ENCODE measurements at regions of chr12 and their contacts with region 1.

Region 1: DNA sequence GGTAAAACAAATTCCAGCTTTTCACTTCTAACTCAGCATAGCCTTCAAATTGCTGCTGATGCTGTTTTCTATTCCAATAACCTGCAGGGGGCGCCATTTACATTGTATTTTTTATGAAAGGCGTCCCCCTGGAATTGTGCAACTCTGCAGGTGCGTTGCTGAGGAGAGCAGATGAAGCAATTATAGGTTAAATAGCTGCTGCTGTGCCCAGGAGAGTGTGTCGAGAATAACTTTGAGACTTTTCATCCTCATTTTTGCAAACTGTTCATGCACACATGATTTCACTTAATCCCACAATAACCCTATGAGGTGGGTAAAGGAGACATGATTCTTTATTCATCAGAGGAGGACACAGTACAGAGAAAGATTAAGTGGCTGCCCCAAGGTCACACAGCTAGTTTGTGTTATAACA is 75.7 kb downstream of the MYRFL start:
- DNase-seq: peak; percentile 72
- H3K4me3 ChIP-seq: no peak overlapping the region
- H3K27ac ChIP-seq: peak overlapping the region; percentile 35
- H3K4me1 ChIP-seq: peaks cover 12% of the 10 kb centered on the region
- H3K27me3 ChIP-seq: no peaks in the 10 kb centered on the region
- CTCF ChIP-seq: peak; percentile 62
- POLR2A ChIP-seq: no peak

Region 2: GRCh38 chr12:69879041-69879960 is 21.4 kb before region 1 on chr12:
- CTCF ChIA-PET with region 1: interaction called, 17 read pairs
- POLR2A ChIA-PET with region 1: no interaction called
- dilution Hi-C with region 1: no loop called
- intact Hi-C with region 1: no loop called
- DNase-seq: peak; percentile 76
- H3K4me3 ChIP-seq: no peak overlapping the region
- H3K27ac ChIP-seq: no peak overlapping the region
- H3K4me1 ChIP-seq: no peaks in the 10 kb centered on the region
- H3K27me3 ChIP-seq: no peaks in the 10 kb centered on the region
- CTCF ChIP-seq: peak; percentile 87
- POLR2A ChIP-seq: no peak

Region 3: DNA sequence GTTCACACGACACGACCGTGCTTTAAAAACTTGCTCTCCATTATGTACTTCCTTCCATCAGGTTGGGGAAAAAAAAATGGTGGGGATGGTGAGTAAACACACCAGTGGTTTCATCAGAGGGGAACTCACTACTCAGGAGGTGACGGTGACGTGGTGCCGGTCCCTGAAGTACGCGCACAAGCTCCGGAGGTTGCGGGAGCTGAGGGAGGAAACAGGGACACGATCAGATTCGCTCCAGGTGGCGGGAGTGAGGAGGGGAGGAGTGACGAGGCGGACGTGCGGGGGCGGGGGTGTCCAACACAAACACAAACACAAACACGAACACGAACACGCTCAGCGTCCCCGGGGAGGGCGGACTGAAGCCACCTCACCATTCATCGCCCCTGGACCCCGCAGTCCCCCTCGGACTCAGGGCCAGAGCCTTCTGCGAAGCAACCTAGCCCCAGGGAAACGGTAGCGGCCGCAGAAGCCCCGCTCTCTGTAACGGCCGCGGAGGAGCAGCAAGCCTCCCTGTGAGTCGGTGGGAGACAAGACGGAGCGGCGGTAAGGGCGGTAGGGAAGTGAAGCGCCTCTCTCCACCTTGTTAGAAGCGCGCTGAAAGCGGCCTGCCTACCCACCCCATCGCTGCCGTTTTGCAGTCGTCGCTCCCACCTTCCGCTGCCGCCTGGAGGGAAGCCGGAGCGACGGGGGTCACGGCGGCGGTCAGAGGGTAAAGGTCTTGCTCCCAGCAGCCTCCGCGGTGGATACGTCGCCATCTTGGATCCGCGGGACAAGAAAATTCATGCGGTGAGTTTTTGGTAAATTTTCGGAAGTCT is 342.2 kb after region 1 on chr12 and contains the start of gene CNOT2:
- CTCF ChIA-PET with region 1: interaction called, 4 read pairs
- POLR2A ChIA-PET with region 1: no interaction called
- dilution Hi-C with region 1: no loop called
- intact Hi-C with region 1: loop called (anchors 1 kb)
- DNase-seq: peak; percentile 93
- H3K4me3 ChIP-seq: peak within 1 kb of the TSS; percentile 83 to 97 (median 84)
- H3K27ac ChIP-seq: peak within 1 kb of the TSS; percentile 86
- H3K4me1 ChIP-seq: peaks cover 47% of the 10 kb centered on the region
- H3K27me3 ChIP-seq: no peaks in the 10 kb centered on the region
- CTCF ChIP-seq: no peak
- POLR2A ChIP-seq: peak; percentile 35
- total RNA-seq, gene CNOT2: 79.1 and 79.7 TPM in 2 replicates

Region 4: GRCh38 chr12:70507442-70507841 is 606.7 kb after region 1 on chr12:
- CTCF ChIA-PET with region 1: interaction called, 6 read pairs
- POLR2A ChIA-PET with region 1: no interaction called
- dilution Hi-C with region 1: no loop called
- intact Hi-C with region 1: loop called (anchors 2 kb)
- DNase-seq: peak; percentile 94
- H3K4me3 ChIP-seq: no peak overlapping the region
- H3K27ac ChIP-seq: peak overlapping the region; percentile 83
- H3K4me1 ChIP-seq: peaks cover 20% of the 10 kb centered on the region
- H3K27me3 ChIP-seq: no peaks in the 10 kb centered on the region
- CTCF ChIP-seq: no peak
- POLR2A ChIP-seq: peak; percentile 55

Region 5: GRCh38 chr12:70576346-70577282 is 675.9 kb after region 1 on chr12:
- CTCF ChIA-PET with region 1: interaction called, 16 read pairs
- POLR2A ChIA-PET with region 1: no interaction called
- dilution Hi-C with region 1: no loop called
- intact Hi-C with region 1: loop called (anchors 1 kb)
- DNase-seq: peak; percentile 68
- H3K4me3 ChIP-seq: no peak overlapping the region
- H3K27ac ChIP-seq: peak overlapping the region; percentile 35
- H3K4me1 ChIP-seq: peaks cover 13% of the 10 kb centered on the region
- H3K27me3 ChIP-seq: no peaks in the 10 kb centered on the region
- CTCF ChIP-seq: peak; percentile 59 to 62
- POLR2A ChIP-seq: no peak